GM12878 (cell line): ENCODE measurements at regions of chr1 and their contacts with region 1.

Region 1: DNA sequence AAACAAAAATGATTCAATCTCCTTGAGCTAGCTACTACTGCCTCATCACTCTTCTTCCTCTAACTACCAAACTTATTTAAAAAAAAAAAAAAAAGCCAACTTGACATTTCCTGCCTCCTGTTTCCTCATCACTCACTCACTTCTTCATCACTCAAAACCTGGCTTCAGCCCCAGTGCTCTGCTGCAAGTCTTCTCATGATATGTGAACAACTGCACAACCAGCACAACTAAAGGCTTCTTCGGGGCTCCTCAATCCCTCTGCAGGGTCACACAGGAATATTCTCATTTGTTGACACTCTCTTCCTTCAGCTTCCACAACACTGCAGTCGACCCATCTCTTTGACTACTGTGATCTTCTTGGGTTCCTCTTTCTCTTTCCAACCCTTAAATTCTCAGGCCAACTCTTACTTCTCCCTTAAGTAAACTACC is 7.6 kb downstream of the MTF1 start:
- DNase-seq: peak; percentile 11
- ATAC-seq: peak; percentile 52
- H3K4me3 ChIP-seq: peak overlapping the region; percentile 17; the same call in 1 of the 2 replicates
- H3K27ac ChIP-seq: no peak overlapping the region
- H3K4me1 ChIP-seq: peaks cover 10% of the 10 kb centered on the region; the same call in 1 of the 2 replicates
- H3K27me3 ChIP-seq: no peaks in the 10 kb centered on the region
- CTCF ChIP-seq: no peak
- EP300 ChIP-seq: no peak
- POLR2A ChIP-seq: no peak
- RAD21 ChIP-seq: no peak

Region 2: DNA sequence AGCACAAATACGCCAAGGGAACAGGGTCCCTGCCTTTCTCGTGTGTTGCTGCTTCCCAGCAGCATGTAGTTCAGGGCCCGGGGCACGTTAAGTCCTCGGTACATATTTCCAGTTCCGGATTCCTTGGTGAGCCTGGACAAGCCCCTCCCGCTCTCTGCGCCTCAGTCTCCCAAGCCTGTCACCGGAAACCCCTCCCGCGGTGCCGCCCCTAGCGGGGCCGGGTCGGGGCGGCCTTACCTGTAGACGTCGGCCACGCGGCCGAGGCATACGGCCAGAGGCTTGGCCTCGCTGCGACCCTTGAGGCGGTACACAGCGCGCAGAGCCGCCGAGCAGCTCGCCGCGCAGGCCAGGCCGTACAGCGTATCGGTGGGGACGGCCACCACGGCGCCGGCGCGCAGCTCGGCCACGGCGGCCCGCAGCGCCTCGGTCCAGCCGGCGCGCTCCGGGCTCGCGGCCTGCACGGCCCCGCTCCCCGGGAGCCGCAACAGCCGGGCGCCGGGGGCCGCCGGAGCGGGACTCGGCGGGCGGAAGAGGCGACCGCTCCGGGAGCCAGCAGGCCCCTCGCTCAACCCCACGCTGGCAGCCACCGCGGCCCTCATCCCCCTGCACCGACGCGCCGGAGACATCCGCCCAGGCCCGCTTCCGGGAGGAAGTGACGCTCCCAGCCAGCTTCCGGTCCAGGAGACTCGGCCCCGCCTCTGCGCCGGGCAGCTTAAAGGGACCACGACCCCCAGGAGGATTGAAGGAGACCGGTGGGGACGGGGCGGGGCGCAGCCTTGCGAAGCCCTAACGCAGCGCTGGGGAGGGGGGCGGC is 44.0 kb before region 1 on chr1 and contains the starts of genes C1orf122 and YRDC:
- CTCF ChIA-PET with region 1: interaction called, 3 read pairs
- POLR2A ChIA-PET with region 1: interaction called, 13 read pairs
- RAD21 ChIA-PET with region 1: no interaction called
- SMC1A ChIA-PET with region 1: interaction called, 5 read pairs
- in situ Hi-C with region 1: no loop called
- intact Hi-C with region 1: no loop called
- DNase-seq: peak; percentile 35
- ATAC-seq: peak; percentile 93
- H3K4me3 ChIP-seq: peak within 1 kb of the TSS; percentile 91
- H3K27ac ChIP-seq: peak within 1 kb of the TSS; percentile 81
- H3K4me1 ChIP-seq: peaks cover 11% of the 10 kb centered on the region
- H3K27me3 ChIP-seq: no peaks in the 10 kb centered on the region
- CTCF ChIP-seq: no peak
- EP300 ChIP-seq: no peak
- POLR2A ChIP-seq: peak; percentile 98
- RAD21 ChIP-seq: no peak
- polyA plus RNA-seq, gene C1orf122: 1.6 to 8.4 TPM
- polyA plus RNA-seq, gene YRDC: 4.5 to 15.3 TPM

Region 3: DNA sequence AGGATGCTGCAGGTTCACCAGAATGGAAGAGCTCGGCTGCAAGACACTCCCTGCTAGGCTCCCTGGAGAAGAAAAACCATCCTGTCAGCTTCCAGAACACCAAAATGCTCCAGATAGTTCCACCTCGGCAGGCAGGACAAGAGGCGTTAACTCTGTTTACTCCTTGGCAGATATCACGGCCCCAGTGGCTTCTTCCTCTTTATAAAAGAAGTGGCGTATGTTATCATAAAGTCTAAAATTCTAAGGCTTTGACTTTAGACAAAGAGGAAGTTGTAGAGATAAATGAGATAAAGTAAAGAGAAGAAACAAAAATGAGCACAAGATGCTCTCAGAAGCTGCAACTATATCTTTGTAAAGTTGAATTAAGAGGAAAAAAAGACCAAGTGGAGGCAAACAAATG is 31.9 kb after region 1 on chr1:
- CTCF ChIA-PET with region 1: no interaction called
- POLR2A ChIA-PET with region 1: no interaction called
- RAD21 ChIA-PET with region 1: no interaction called
- SMC1A ChIA-PET with region 1: no interaction called
- in situ Hi-C with region 1: no loop called
- intact Hi-C with region 1: no loop called
- DNase-seq: no peak
- ATAC-seq: no peak
- H3K4me3 ChIP-seq: no peak overlapping the region
- H3K27ac ChIP-seq: no peak overlapping the region
- H3K4me1 ChIP-seq: no peaks in the 10 kb centered on the region
- H3K27me3 ChIP-seq: no peaks in the 10 kb centered on the region
- CTCF ChIP-seq: no peak
- EP300 ChIP-seq: no peak
- POLR2A ChIP-seq: no peak
- RAD21 ChIP-seq: no peak

Region 4: GRCh38 chr1:37974567-37974966 is 122.8 kb after region 1 on chr1:
- CTCF ChIA-PET with region 1: no interaction called
- POLR2A ChIA-PET with region 1: no interaction called
- RAD21 ChIA-PET with region 1: no interaction called
- SMC1A ChIA-PET with region 1: no interaction called
- in situ Hi-C with region 1: no loop called
- intact Hi-C with region 1: no loop called
- DNase-seq: no peak
- ATAC-seq: no peak
- H3K4me3 ChIP-seq: no peak overlapping the region
- H3K27ac ChIP-seq: no peak overlapping the region
- H3K4me1 ChIP-seq: no peaks in the 10 kb centered on the region
- H3K27me3 ChIP-seq: no peaks in the 10 kb centered on the region
- CTCF ChIP-seq: no peak
- EP300 ChIP-seq: no peak
- POLR2A ChIP-seq: no peak
- RAD21 ChIP-seq: no peak

Region 5: GRCh38 chr1:38018864-38019343 is 167.1 kb after region 1 on chr1:
- CTCF ChIA-PET with region 1: interaction called, 4 read pairs
- POLR2A ChIA-PET with region 1: interaction called, 10 read pairs
- RAD21 ChIA-PET with region 1: no interaction called
- SMC1A ChIA-PET with region 1: no interaction called
- in situ Hi-C with region 1: no loop called
- intact Hi-C with region 1: no loop called
- DNase-seq: no peak
- ATAC-seq: peak; percentile 71
- H3K4me3 ChIP-seq: no peak overlapping the region
- H3K27ac ChIP-seq: no peak overlapping the region
- H3K4me1 ChIP-seq: no peaks in the 10 kb centered on the region
- H3K27me3 ChIP-seq: no peaks in the 10 kb centered on the region
- CTCF ChIP-seq: peak; percentile 47 to 69 (median 54); a peak in 4 of 6 replicates
- EP300 ChIP-seq: no peak
- POLR2A ChIP-seq: no peak
- RAD21 ChIP-seq: peak; percentile 62